ENCODE measurements at regions of chr7 and their contacts with region 1.

Region 1: GRCh38 chr7:79282063-79282694 is 171.3 kb downstream of the MAGI2 start:
- DNase-seq: peak; percentile 33 to 63 (median 57)
- H3K4me3 ChIP-seq: no peak overlapping the region
- H3K27ac ChIP-seq: no peak overlapping the region
- H3K4me1 ChIP-seq: peaks cover 0 to 3% (median 0%) of the 10 kb centered on the region in 4 experiments
- H3K27me3 ChIP-seq: no peaks in the 10 kb centered on the region

Region 2: GRCh38 chr7:79292834-79293233 is 10.7 kb after region 1 on chr7:
- CTCF ChIA-PET with region 1: interaction called, 13 read pairs
- POLR2A ChIA-PET with region 1: no interaction called
- DNase-seq: no peak
- H3K4me3 ChIP-seq: no peak overlapping the region
- H3K27ac ChIP-seq: no peak overlapping the region
- H3K4me1 ChIP-seq: no peaks in the 10 kb centered on the region
- H3K27me3 ChIP-seq: no peaks in the 10 kb centered on the region